ENCODE measurements at regions of chr1 and their contacts with region 1.

Region 1: DNA sequence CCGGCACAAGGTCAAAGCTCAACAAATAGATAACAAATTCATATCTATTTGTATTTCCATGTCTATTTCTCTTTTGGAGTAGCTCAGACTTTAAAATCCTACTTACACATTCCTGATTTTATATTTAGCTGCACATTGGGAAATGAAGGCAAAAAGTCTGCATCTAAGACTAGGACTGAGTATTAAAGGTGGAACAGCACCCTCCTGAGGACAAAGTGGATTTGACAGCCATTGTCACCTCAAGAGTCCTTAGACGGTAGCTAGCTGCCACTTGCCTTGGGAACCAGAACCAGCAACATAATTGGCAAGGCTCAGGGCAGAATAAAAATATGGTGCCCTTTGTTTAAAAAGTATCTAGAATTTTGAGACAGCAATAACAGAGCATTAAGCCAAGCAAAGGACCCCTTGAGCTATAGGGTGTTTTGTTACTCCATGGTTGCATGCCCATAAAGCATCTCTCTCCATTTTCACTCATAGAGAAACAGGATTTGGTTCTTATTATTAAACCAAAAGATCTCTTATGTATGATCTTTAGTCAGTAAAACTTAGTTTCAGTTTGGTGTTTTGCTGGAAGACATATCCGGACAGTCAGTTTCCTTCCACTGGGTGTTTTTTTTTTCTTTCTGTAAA is 30.0 kb upstream of the SGIP1 start:
- DNase-seq: peak; percentile 39 to 42
- H3K4me3 ChIP-seq: no peak overlapping the region
- H3K4me3 Mint-ChIP-seq: no peak overlapping the region
- H3K27ac Mint-ChIP-seq: no peak overlapping the region
- H3K4me1 ChIP-seq: no peaks in the 10 kb centered on the region
- H3K4me1 Mint-ChIP-seq: peaks cover 6% of the 10 kb centered on the region
- H3K27me3 ChIP-seq: no peaks in the 10 kb centered on the region
- H3K27me3 Mint-ChIP-seq: peaks cover 4% of the 10 kb centered on the region
- CTCF ChIP-seq: peak; percentile 40 to 56

Region 2: GRCh38 chr1:65958561-65959350 is 545.2 kb before region 1 on chr1:
- CTCF ChIA-PET with region 1: no interaction called
- POLR2A ChIA-PET with region 1: no interaction called
- intact Hi-C with region 1: loop called (anchors 5 kb)
- DNase-seq: peak in 1 of 2 experiments; percentile 45
- H3K4me3 ChIP-seq: no peak overlapping the region
- H3K4me3 Mint-ChIP-seq: no peak overlapping the region
- H3K27ac Mint-ChIP-seq: no peak overlapping the region
- H3K4me1 ChIP-seq: no peaks in the 10 kb centered on the region
- H3K4me1 Mint-ChIP-seq: no peaks in the 10 kb centered on the region
- H3K27me3 ChIP-seq: no peaks in the 10 kb centered on the region
- H3K27me3 Mint-ChIP-seq: peaks cover 2% of the 10 kb centered on the region
- CTCF ChIP-seq: peak in 1 of 2 experiments; percentile 37

Region 3: GRCh38 chr1:66253330-66253921 is 250.5 kb before region 1 on chr1:
- CTCF ChIA-PET with region 1: no interaction called
- POLR2A ChIA-PET with region 1: no interaction called
- intact Hi-C with region 1: loop called (anchors 1 kb)
- DNase-seq: peak in 1 of 2 experiments; percentile 18
- H3K4me3 ChIP-seq: no peak overlapping the region
- H3K4me3 Mint-ChIP-seq: no peak overlapping the region
- H3K27ac Mint-ChIP-seq: no peak overlapping the region
- H3K4me1 ChIP-seq: no peaks in the 10 kb centered on the region
- H3K4me1 Mint-ChIP-seq: no peaks in the 10 kb centered on the region
- H3K27me3 ChIP-seq: no peaks in the 10 kb centered on the region
- H3K27me3 Mint-ChIP-seq: peaks cover 14% of the 10 kb centered on the region
- CTCF ChIP-seq: peak; percentile 24 to 50

Region 4: DNA sequence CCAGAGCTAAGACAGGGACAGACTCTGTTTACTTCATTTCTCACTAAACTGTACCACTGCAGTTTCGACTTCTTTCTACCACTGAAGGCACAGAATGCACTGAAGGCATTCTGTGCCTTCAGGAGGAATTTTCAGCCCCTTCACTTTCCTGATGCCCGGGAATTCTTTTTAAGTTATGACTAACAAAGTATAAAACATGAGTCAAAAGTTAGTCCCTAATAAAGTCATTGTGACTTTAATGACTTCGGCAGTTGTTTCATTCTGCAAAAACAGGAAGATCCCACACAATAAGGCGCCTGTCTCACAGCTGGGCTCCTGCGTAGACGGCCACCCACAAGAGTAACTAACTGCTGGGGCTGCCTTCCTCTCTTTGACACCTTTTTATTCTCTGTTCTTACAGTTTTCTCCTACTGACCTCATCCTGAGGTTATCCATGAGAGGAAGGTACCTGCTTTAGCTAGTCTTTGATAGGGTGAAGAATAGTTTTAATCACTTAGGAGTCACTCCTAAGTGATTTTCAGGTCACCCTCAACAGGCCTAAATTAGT is 153.9 kb before region 1 on chr1:
- CTCF ChIA-PET with region 1: no interaction called
- POLR2A ChIA-PET with region 1: no interaction called
- intact Hi-C with region 1: no loop called
- DNase-seq: no peak
- H3K4me3 ChIP-seq: no peak overlapping the region
- H3K4me3 Mint-ChIP-seq: no peak overlapping the region
- H3K27ac Mint-ChIP-seq: no peak overlapping the region
- H3K4me1 ChIP-seq: no peaks in the 10 kb centered on the region
- H3K4me1 Mint-ChIP-seq: no peaks in the 10 kb centered on the region
- H3K27me3 ChIP-seq: no peaks in the 10 kb centered on the region
- H3K27me3 Mint-ChIP-seq: peaks cover 7% of the 10 kb centered on the region
- CTCF ChIP-seq: no peak

Region 5: DNA sequence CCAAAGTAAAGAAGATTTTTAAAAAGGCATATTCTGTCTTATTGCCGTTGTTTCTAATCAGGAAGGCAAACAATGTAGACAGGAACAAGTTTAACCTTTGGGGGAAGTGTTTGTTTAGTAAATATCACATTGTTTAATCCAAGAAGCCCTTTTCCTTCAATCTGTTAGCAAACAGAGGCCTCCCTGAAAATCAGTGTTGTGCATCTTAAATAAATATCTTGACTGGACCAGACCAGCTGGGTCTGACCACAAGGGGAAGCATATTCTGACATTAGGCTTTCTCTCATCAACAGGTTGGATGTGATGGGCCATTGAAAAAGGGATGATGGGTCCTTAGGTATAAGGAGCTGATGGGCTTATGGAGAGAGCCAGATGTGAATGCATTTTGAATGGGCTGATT is 51.8 kb before region 1 on chr1:
- CTCF ChIA-PET with region 1: no interaction called
- POLR2A ChIA-PET with region 1: no interaction called
- intact Hi-C with region 1: loop called (anchors 5 kb)
- DNase-seq: no peak
- H3K4me3 ChIP-seq: no peak overlapping the region
- H3K4me3 Mint-ChIP-seq: no peak overlapping the region
- H3K27ac Mint-ChIP-seq: no peak overlapping the region
- H3K4me1 ChIP-seq: no peaks in the 10 kb centered on the region
- H3K4me1 Mint-ChIP-seq: no peaks in the 10 kb centered on the region
- H3K27me3 ChIP-seq: no peaks in the 10 kb centered on the region
- H3K27me3 Mint-ChIP-seq: peaks cover 4% of the 10 kb centered on the region
- CTCF ChIP-seq: no peak

Region 6: DNA sequence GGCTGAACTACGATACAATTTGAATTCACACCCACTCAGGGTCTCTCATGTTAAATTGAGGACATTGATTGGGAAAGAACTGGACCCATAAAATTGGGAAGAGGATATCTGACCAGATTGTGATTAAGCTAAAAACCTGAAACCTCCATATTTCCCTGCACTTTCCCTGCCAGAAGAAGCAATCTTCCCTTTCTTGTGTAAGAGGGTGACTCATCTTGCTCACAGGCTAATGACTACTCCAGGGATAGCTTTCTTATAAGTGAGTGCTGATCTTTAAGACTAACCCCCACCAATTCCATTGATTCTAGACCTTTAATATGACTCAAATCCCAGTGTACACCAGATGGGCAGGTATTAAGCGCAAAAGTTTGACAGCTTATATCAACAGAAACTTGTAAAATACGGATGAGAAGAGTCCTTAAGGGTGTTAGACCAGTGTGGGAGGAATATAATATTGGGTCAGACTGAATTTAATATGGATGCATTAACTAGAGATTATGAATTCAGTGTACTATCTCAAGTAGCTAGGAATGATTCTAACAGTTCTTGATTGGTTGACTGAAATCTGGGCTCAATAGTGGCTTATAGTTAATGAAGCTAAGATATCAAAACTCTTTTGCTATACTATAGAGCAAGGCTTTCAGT is 17.9 kb after region 1 on chr1:
- CTCF ChIA-PET with region 1: no interaction called
- POLR2A ChIA-PET with region 1: no interaction called
- intact Hi-C with region 1: no loop called
- DNase-seq: no peak
- H3K4me3 ChIP-seq: no peak overlapping the region
- H3K4me3 Mint-ChIP-seq: no peak overlapping the region
- H3K27ac Mint-ChIP-seq: no peak overlapping the region
- H3K4me1 ChIP-seq: peaks cover 15% of the 10 kb centered on the region
- H3K4me1 Mint-ChIP-seq: no peaks in the 10 kb centered on the region
- H3K27me3 ChIP-seq: no peaks in the 10 kb centered on the region
- H3K27me3 Mint-ChIP-seq: no peaks in the 10 kb centered on the region
- CTCF ChIP-seq: no peak

Region 7: DNA sequence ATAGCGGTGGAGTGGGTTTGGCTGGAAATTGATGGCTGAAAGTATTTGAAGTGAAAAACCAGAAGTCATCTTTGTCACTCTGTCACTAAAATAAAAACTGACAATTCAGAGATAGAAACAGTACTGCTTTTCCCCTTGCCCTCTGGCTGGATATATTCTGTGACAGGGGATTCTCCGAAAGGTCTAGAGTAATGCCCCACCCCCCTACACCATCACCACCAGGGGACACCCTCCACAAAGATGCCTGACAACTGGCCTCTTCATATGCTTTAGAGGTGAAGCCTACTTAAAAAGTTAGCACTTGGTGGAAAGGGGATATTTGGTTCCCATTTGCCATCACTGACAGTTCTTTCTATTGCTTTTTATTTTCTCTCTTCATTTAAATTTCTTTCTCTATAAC is 103.5 kb after region 1 on chr1:
- CTCF ChIA-PET with region 1: no interaction called
- POLR2A ChIA-PET with region 1: no interaction called
- intact Hi-C with region 1: no loop called
- DNase-seq: peak in 1 of 2 experiments; percentile 2
- H3K4me3 ChIP-seq: no peak overlapping the region
- H3K4me3 Mint-ChIP-seq: no peak overlapping the region
- H3K27ac Mint-ChIP-seq: no peak overlapping the region
- H3K4me1 ChIP-seq: no peaks in the 10 kb centered on the region
- H3K4me1 Mint-ChIP-seq: no peaks in the 10 kb centered on the region
- H3K27me3 ChIP-seq: no peaks in the 10 kb centered on the region
- H3K27me3 Mint-ChIP-seq: no peaks in the 10 kb centered on the region
- CTCF ChIP-seq: peak in 1 of 2 experiments; percentile 8

Measured in Caco-2 (cell line).